Activated T-helper 1 cell treated with anti-CD3 and anti-CD28 coated beads, Interleukin-12 subunit alpha, Interleukin-12 subunit beta, Interleukin-2, Interleukin-4 antibody, amounts not matched to agents 30 ng/mL and 10 ng/mL and 1 ng/mL, durations not matched to agents 14 hours and 24 hours and 36 hours (primary cell): ENCODE measurements at regions of chr4 and their contacts with region 1.

Region 1: DNA sequence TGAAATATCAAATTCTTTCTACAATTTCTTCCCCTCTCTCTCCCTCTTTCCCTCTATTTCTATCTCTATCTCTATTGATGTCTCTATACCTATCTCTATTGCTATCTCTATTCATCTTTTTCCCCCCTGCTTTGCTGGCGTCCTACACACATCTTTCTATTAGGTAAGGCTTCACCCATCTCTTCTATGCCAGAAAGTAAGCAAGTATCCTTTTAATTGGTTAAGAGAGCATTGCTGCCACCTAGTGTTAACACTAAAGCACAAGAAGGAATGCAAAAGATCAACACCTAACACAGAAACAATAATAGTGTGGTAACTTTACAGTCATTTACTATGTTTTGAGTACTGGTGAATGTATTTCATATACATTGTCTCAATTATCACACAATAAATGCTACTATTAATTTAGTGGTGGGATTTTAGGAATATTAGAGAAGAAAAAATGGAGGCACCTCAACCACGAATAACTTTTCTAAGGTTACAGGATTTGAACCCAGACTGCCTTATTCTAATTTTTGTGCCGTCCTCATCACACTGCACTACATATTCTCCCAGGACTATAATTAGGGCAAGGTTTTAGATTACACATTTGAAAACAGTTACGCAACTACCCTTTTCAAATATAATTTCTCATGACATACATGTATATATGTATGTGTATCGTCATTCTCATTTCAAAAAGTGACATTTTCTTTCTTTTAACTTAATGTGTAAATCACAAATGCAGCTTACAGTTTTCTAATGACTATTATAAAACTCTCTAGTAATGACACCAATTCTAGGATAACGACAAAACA is 3.7 kb upstream of the C4orf36 start:
- DNase-seq: peak; percentile 4
- H3K4me3 Mint-ChIP-seq: no peak overlapping the region
- H3K27ac Mint-ChIP-seq: no peak overlapping the region
- H3K4me1 Mint-ChIP-seq: no peaks in the 10 kb centered on the region
- H3K27me3 Mint-ChIP-seq: peaks cover 26% of the 10 kb centered on the region

Region 2: DNA sequence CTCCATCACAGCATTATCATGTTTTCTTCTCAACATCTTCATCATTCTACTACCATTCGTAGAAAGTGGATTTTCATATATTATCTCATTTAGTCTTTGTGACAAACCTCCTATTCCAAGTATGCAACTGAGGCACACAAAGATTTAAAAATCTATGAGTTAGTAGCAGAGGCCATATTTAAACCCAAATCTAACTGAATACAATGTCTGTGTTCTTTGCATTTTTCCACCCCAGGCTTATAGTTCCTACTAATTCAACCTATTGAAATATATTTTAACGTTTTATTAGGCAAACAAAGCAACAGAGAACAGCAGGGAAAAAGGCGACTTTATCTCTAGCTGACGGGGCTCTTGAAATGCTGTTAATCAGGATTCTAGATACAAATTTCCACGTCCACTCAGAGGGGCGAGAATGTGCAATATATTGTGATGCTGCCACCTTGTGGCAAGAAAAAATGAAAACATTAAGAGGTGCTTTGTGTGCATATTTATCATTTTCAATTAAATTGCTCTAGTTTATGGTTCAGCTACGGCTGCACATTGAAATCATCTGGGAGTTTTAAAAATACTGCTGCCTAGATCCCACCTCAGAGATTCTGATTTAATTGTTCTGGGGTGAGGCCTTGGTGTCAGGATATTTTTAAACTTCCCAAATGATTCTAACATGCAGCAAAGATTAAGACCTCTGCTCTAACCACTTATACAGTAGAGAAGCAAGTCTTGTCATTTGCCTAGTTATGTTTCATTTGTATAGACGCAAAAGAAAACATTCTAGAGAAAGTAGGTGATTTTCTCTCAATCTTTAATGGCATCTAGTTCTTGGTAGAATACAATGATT is 851.9 kb before region 1 on chr4:
- intact Hi-C with region 1: loop called (anchors 10 kb)
- DNase-seq: peak; percentile 2
- H3K4me3 Mint-ChIP-seq: no peak overlapping the region
- H3K27ac Mint-ChIP-seq: no peak overlapping the region
- H3K4me1 Mint-ChIP-seq: no peaks in the 10 kb centered on the region
- H3K27me3 Mint-ChIP-seq: peaks cover 2% of the 10 kb centered on the region

Region 3: DNA sequence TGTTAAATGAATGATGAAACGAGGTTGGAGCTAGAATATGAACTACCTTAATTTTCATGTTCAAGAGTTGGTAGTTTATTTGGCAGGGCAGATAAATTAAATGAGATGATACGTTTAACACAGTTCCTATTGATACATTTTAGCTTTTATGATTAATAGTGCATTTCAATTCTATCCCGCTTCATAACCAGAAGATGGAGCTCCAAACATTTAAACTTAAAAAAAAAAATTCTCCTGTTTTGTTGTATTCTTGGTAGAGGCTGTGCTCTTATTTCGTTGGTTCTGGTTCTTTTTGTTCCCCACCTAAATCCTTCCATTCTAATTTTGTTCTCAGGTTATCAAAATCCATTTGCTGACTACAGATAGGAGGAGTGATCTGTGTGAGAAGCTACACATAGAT is 373.5 kb before region 1 on chr4:
- intact Hi-C with region 1: loop called (anchors 1 kb)
- DNase-seq: no peak
- H3K4me3 Mint-ChIP-seq: no peak overlapping the region
- H3K27ac Mint-ChIP-seq: no peak overlapping the region
- H3K4me1 Mint-ChIP-seq: peaks cover 16% of the 10 kb centered on the region
- H3K27me3 Mint-ChIP-seq: peaks cover 24% of the 10 kb centered on the region

Region 4: DNA sequence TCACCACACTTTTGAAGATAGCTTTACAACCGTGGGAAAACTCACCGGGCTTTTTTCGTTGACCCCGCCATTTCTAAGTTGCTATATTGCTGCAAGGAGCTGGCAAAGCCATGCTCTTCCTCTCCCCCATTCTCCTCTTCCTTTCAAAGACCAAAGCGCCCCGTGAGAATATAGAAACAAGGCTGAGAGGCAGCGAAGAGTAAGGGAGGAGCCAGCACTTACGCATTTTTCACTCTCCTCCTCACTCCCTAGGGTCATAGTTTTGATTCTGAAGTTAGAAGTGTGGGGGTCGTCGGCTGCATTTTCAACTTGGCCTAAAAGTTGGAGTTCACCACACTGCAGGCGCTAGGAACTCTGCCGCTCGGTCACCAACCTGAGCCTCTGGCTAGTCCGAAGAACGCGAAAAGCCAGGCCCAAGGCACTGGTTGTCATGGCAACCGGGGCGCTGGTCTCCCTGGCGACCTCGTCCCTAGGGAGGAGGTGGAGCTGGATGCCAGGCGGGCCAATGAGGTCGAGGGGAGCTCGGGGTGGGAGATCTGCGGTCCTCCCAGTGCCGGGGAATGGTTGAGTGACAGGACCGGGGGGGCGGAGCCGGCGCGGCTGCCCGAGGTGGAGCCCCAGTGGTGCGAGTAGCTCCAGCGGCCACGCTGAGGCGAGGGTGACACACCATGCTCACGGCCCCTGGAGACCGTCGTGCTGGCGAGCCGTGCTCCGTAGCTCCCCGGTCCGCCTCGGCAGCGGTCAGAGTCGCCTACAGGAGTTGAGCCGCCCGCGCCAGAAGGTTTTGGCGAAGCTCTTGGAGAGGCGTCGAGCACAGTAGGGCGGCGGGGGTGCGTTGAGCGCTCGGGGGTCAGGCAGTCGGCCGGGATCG is 302.0 kb before region 1 on chr4 and contains the start of gene PTPN13:
- intact Hi-C with region 1: loop called (anchors 2 kb)
- DNase-seq: peak; percentile 45
- H3K4me3 Mint-ChIP-seq: peak within 1 kb of the TSS; percentile 74
- H3K27ac Mint-ChIP-seq: peak within 1 kb of the TSS; percentile 69
- H3K4me1 Mint-ChIP-seq: peaks cover 8% of the 10 kb centered on the region
- H3K27me3 Mint-ChIP-seq: peaks cover 47% of the 10 kb centered on the region
- total RNA-seq, gene PTPN13: 0.44 and 0.66 TPM in 2 replicates

Region 5: DNA sequence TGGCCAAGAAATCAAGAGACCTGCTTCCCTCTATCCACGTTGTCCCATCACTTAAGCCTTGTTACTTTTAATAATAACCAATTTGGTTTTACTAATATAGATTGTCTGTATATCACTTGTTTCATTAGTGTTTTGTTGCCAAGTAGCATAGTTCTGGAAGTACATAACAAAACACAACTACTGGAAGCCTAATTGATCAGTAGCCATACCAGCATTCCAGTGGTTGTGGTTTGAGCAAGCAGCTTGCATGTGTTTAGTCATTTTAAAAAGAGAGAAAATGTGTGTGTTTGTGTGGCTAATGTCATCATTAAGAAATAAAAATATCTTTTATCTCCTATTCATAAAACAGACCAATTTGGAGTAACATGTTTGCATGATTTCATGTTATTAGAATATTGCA is 230.9 kb before region 1 on chr4:
- intact Hi-C with region 1: loop called (anchors 10 kb)
- DNase-seq: no peak
- H3K4me3 Mint-ChIP-seq: no peak overlapping the region
- H3K27ac Mint-ChIP-seq: no peak overlapping the region
- H3K4me1 Mint-ChIP-seq: no peaks in the 10 kb centered on the region
- H3K27me3 Mint-ChIP-seq: peaks cover 4% of the 10 kb centered on the region

Region 6: DNA sequence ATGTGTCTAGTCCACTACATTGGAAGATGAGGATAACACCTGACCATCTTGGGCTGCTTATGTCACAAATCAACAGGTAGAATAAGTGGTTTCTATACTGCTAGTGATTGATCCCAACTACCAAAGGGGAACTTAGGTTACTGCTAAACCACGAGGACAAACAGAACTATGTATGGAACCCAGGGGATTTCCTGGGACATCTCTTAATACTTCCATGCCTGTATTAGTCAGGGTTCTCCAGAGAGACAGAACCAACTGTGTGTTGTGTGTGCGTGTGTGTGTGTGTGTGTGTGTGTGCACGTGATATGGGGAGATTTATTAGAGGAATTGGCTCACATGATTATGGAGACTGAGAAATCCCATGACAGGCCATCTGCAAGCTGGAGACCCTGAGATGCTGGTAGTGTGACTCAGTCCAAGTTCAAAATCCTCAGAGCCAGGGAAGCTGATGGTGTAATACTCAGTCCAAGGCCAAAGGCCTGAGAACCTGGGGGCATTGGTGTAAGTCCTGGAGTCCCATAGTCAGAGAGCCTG is 22.7 kb after region 1 on chr4:
- intact Hi-C with region 1: no loop called
- DNase-seq: no peak
- H3K4me3 Mint-ChIP-seq: no peak overlapping the region
- H3K27ac Mint-ChIP-seq: no peak overlapping the region
- H3K4me1 Mint-ChIP-seq: peaks cover 5% of the 10 kb centered on the region
- H3K27me3 Mint-ChIP-seq: no peaks in the 10 kb centered on the region

Region 7: GRCh38 chr4:87006676-87007527 is 111.0 kb after region 1 on chr4:
- intact Hi-C with region 1: no loop called
- DNase-seq: peak; percentile 87
- H3K4me3 Mint-ChIP-seq: peak overlapping the region; percentile 98
- H3K27ac Mint-ChIP-seq: peak overlapping the region; percentile 96
- H3K4me1 Mint-ChIP-seq: peaks cover 52% of the 10 kb centered on the region
- H3K27me3 Mint-ChIP-seq: no peaks in the 10 kb centered on the region